ENCODE measurements at regions of chr20 and their contacts with region 1.

Region 1: DNA sequence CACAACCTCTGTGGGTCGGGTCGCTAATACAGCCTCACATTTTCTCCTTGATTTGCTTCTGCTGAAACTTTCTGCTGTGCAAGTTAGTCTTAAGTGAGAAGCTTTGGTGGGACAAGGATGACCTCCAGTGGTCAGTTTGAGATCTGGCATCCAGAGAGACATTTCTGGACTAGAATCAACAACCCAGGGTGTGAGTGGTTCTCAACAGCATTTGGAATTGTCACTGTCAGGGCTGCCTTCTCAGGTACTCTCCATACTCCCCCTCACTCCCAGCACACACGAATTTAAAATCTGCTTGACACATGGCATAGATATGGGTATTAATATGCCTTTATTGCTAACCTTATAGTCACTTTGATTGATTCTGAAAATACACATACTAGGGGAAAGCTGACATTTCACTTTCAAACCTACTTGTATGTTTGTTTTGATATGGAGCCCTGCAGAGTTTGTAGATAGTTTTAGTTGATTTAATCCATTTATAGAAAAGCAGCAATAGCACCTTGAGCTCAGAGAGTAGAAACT is 13.2 kb downstream of the OTOR start:
- DNase-seq: peak; percentile 14
- H3K4me3 Mint-ChIP-seq: no peak overlapping the region
- H3K27ac Mint-ChIP-seq: no peak overlapping the region
- H3K4me1 Mint-ChIP-seq: no peaks in the 10 kb centered on the region
- H3K27me3 Mint-ChIP-seq: peaks cover 14% of the 10 kb centered on the region

Region 2: GRCh38 chr20:15708984-15709598 is 1052.3 kb before region 1 on chr20:
- intact Hi-C with region 1: loop called (anchors 10 kb)
- DNase-seq: no peak
- H3K4me3 Mint-ChIP-seq: no peak overlapping the region
- H3K27ac Mint-ChIP-seq: no peak overlapping the region
- H3K4me1 Mint-ChIP-seq: no peaks in the 10 kb centered on the region
- H3K27me3 Mint-ChIP-seq: no peaks in the 10 kb centered on the region

Region 3: GRCh38 chr20:16517946-16518783 is 243.2 kb before region 1 on chr20:
- intact Hi-C with region 1: loop called (anchors 1 kb)
- DNase-seq: no peak
- H3K4me3 Mint-ChIP-seq: no peak overlapping the region
- H3K27ac Mint-ChIP-seq: no peak overlapping the region
- H3K4me1 Mint-ChIP-seq: no peaks in the 10 kb centered on the region
- H3K27me3 Mint-ChIP-seq: no peaks in the 10 kb centered on the region

Region 4: GRCh38 chr20:16615199-16615598 is 146.2 kb before region 1 on chr20:
- intact Hi-C with region 1: no loop called
- DNase-seq: no peak
- H3K4me3 Mint-ChIP-seq: no peak overlapping the region
- H3K27ac Mint-ChIP-seq: no peak overlapping the region
- H3K4me1 Mint-ChIP-seq: no peaks in the 10 kb centered on the region
- H3K27me3 Mint-ChIP-seq: peaks cover 1% of the 10 kb centered on the region

Region 5: DNA sequence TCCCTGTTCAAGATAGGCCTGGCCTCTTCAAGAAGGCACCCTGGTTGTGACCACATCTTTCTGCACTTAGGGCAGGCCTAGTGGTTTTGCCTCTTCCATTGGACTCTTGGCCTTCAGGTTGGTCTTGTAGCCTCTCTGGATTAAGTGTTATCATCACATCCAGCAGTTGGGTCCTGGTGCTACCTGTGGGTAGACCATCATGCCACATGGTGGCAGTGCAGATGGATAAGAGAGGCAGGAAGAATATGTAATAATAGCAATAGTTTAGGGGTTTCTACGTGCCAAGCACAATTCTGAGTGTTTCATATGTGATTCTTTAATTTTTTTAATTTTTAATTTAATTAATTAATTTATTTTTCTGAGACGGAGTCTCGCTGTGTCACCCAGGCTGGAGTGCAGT is 60.1 kb before region 1 on chr20:
- intact Hi-C with region 1: loop called (anchors 1 kb)
- DNase-seq: no peak
- H3K4me3 Mint-ChIP-seq: no peak overlapping the region
- H3K27ac Mint-ChIP-seq: no peak overlapping the region
- H3K4me1 Mint-ChIP-seq: no peaks in the 10 kb centered on the region
- H3K27me3 Mint-ChIP-seq: peaks cover 8% of the 10 kb centered on the region

Measured in activated T-helper 1 cell treated with anti-CD3 and anti-CD28 coated beads, Interleukin-12 subunit alpha, Interleukin-12 subunit beta, Interleukin-2, Interleukin-4 antibody, amounts not matched to agents 30 ng/mL and 10 ng/mL and 1 ng/mL, durations not matched to agents 14 hours and 24 hours and 36 hours (primary cell).